Sciatic nerve (tissue), 2 donors: ENCODE measurements at regions of chr4 and their contacts with region 1.

Region 1: GRCh38 chr4:103204111-103204510 is 6.0 kb upstream of the CENPE start:
- DNase-seq: no peak
- ATAC-seq: no peak

Region 2: DNA sequence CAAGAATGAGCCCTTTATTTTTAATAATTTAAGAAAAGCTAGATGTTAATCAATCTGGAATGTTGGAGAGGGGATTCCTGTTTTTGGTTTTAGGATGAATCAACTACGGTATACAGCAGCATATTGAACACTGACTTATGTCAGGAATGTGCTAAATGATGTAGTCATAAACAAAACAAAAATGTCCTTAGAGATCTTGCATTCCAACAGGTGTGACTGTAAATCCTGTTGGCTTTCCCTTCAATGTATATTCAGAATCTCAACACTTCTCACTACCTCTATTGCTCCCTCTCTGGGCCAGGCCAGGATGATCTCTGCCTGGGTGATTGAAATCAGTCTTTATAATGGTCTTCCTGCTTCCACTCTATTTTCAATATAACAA is 66.7 kb before region 1 on chr4:
- intact Hi-C with region 1: no loop called
- DNase-seq: no peak
- ATAC-seq: no peak

Region 3: DNA sequence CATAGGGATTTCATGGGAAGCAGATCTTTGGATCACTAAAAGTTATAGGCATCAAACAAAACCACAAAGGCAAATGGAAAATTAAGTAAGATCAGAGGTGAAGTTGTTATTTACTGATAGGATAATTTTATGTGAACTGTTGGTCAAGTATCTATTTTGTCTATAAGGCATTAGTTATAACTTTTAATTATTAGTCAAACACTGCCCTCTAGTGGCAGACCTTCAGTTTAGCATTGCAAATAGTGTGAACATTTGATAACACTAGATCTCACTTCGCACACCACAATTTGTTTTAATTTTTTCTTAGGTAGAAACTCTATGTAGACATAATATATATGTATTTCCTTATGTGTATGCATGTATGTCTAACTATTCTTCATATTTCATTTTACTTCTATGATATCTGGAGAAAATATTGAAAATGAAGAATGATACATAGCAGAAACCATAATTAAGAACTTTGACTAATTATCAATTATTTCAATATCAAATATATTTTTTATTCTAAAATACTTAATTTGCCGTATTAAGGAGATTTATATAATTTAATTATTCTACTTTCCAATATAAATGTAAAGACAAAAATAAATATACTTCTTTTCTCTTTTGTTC is 730.2 kb after region 1 on chr4:
- intact Hi-C with region 1: loop called (anchors 10 kb)
- DNase-seq: no peak
- ATAC-seq: no peak